Activated CD4-positive, alpha-beta T cell treated with anti-CD3 and anti-CD28 coated beads, Interleukin-2, amount 10 ng/mL, durations not matched to agents 7 days and 5 days (primary cell): ENCODE measurements at regions of chr1 and their contacts with region 1.

Region 1: DNA sequence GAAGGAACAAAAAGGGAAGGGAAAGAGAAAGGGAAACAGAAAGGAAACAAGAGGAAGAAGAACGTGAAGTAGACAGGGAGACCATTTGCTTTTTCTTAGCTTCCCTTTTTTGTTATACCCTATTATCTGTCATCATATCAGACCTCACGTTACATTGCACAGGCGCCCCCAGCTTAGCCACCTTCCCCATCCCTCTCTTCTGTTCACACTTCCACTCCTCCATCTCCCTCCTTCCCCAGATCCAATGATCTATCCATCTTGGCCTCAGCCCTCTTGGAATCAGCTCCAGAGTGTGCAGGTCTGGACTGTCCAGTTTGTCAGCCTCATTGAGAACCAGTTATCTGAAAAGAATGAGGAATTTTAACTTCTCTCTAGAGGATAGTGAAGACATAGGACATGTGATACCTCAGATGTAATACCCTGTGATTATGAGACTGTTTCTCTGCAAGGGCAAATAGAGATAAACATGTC is 101.1 kb upstream of the ERRFI1 start:
- DNase-seq: no peak
- H3K4me3 Mint-ChIP-seq: no peak overlapping the region
- H3K27ac Mint-ChIP-seq: no peak overlapping the region
- H3K4me1 Mint-ChIP-seq: no peaks in the 10 kb centered on the region
- H3K27me3 Mint-ChIP-seq: no peaks in the 10 kb centered on the region

Region 2: GRCh38 chr1:6560267-6560666 is 1566.9 kb before region 1 on chr1:
- CTCF ChIA-PET with region 1: no interaction called
- POLR2A ChIA-PET with region 1: no interaction called
- DNase-seq: no peak
- H3K4me3 Mint-ChIP-seq: no peak overlapping the region
- H3K27ac Mint-ChIP-seq: no peak overlapping the region
- H3K4me1 Mint-ChIP-seq: peaks cover 5% of the 10 kb centered on the region
- H3K27me3 Mint-ChIP-seq: peaks cover 4% of the 10 kb centered on the region

Region 3: GRCh38 chr1:8107897-8108296 is 19.3 kb before region 1 on chr1:
- CTCF ChIA-PET with region 1: no interaction called
- POLR2A ChIA-PET with region 1: no interaction called
- DNase-seq: no peak
- H3K4me3 Mint-ChIP-seq: no peak overlapping the region
- H3K27ac Mint-ChIP-seq: no peak overlapping the region
- H3K4me1 Mint-ChIP-seq: no peaks in the 10 kb centered on the region
- H3K27me3 Mint-ChIP-seq: peaks cover 4% of the 10 kb centered on the region

Region 4: GRCh38 chr1:8137481-8138244 is 10.5 kb after region 1 on chr1:
- CTCF ChIA-PET with region 1: interaction called, 12 read pairs
- POLR2A ChIA-PET with region 1: no interaction called
- DNase-seq: no peak
- H3K4me3 Mint-ChIP-seq: no peak overlapping the region
- H3K27ac Mint-ChIP-seq: no peak overlapping the region
- H3K4me1 Mint-ChIP-seq: no peaks in the 10 kb centered on the region
- H3K27me3 Mint-ChIP-seq: peaks cover 33% of the 10 kb centered on the region